ENCODE measurements at regions of chr14 and their contacts with region 1.

Region 1: GRCh38 chr14:95478309-95478708 is 38.1 kb downstream of the SYNE3 start:
- DNase-seq: no peak
- ATAC-seq: no peak
- H3K4me3 ChIP-seq: no peak overlapping the region
- H3K27ac ChIP-seq: no peak overlapping the region
- H3K4me1 ChIP-seq: peaks cover 7% of the 10 kb centered on the region
- H3K27me3 ChIP-seq: no peaks in the 10 kb centered on the region
- CTCF ChIP-seq: no peak

Region 2: GRCh38 chr14:95059126-95059525 is 419.2 kb before region 1 on chr14:
- CTCF ChIA-PET with region 1: no interaction called
- POLR2A ChIA-PET with region 1: interaction called, 10 read pairs
- in situ Hi-C with region 1: no loop called
- intact Hi-C with region 1: no loop called
- DNase-seq: no peak
- ATAC-seq: no peak
- H3K4me3 ChIP-seq: no peak overlapping the region
- H3K27ac ChIP-seq: no peak overlapping the region
- H3K4me1 ChIP-seq: no peaks in the 10 kb centered on the region
- H3K27me3 ChIP-seq: no peaks in the 10 kb centered on the region
- CTCF ChIP-seq: no peak

Region 3: GRCh38 chr14:95389471-95390011 is 88.8 kb before region 1 on chr14:
- CTCF ChIA-PET with region 1: no interaction called
- POLR2A ChIA-PET with region 1: no interaction called
- in situ Hi-C with region 1: no loop called
- intact Hi-C with region 1: no loop called
- DNase-seq: no peak
- ATAC-seq: no peak
- H3K4me3 ChIP-seq: no peak overlapping the region
- H3K27ac ChIP-seq: no peak overlapping the region
- H3K4me1 ChIP-seq: no peaks in the 10 kb centered on the region
- H3K27me3 ChIP-seq: no peaks in the 10 kb centered on the region
- CTCF ChIP-seq: no peak